Ascending aorta (tissue), 2 donors: ENCODE measurements at regions of chr4 and their contacts with region 1.

Region 1: DNA sequence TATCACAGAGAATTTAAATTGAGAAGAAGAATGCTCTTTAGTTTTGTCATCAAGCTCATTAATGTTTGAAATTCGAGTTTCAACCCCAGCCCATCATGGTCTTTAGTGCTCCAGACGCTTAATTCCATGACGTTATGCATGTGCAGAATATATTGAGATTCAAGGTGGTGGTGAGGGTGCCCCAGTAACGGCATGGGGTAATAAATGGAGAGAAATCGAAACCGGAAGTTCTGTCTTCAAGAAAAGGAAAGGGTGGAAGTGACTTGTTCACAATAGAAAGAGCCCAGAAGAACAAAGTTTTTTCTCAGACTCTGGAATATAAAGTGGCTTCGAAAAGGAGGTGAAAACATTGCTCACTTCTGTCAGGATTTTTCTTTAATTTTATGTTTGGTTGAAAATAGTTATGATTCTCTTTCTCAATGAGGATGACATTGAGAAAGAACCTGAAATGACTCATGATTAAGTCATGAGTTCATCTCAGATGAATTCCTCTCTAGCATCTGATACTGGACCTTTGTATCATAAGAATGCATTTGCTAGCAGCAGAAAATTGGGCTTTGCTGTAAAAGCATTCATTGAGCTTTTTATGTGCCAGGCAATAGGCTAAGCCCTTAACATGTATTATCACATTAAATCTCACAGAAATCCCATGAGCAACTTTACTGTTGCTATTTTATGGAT is 779 bp upstream of the DDX60L start:
- DNase-seq: no peak
- H3K4me3 ChIP-seq: peak overlapping the region; percentile 64 to 75
- H3K27ac ChIP-seq: peak overlapping the region; percentile 82 to 91
- H3K4me1 ChIP-seq: peaks cover 0 to 6% of the 10 kb centered on the region in 2 donors
- H3K27me3 ChIP-seq: no peaks in the 10 kb centered on the region
- CTCF ChIP-seq: no peak

Region 2: GRCh38 chr4:168318266-168318895 is 162.7 kb before region 1 on chr4 and contains the start of gene DDX60:
- intact Hi-C with region 1: loop called (anchors 2 kb)
- DNase-seq: peak; percentile 18 to 84
- H3K4me3 ChIP-seq: peak within 1 kb of the TSS; percentile 80 to 88
- H3K27ac ChIP-seq: peak within 1 kb of the TSS; percentile 89 to 91
- H3K4me1 ChIP-seq: peaks cover 0 to 7% of the 10 kb centered on the region in 2 donors
- H3K27me3 ChIP-seq: no peaks in the 10 kb centered on the region
- CTCF ChIP-seq: peak in 2 of 3 experiments; percentile 38 to 50
- total RNA-seq, gene DDX60: 15.3 TPM

Region 3: DNA sequence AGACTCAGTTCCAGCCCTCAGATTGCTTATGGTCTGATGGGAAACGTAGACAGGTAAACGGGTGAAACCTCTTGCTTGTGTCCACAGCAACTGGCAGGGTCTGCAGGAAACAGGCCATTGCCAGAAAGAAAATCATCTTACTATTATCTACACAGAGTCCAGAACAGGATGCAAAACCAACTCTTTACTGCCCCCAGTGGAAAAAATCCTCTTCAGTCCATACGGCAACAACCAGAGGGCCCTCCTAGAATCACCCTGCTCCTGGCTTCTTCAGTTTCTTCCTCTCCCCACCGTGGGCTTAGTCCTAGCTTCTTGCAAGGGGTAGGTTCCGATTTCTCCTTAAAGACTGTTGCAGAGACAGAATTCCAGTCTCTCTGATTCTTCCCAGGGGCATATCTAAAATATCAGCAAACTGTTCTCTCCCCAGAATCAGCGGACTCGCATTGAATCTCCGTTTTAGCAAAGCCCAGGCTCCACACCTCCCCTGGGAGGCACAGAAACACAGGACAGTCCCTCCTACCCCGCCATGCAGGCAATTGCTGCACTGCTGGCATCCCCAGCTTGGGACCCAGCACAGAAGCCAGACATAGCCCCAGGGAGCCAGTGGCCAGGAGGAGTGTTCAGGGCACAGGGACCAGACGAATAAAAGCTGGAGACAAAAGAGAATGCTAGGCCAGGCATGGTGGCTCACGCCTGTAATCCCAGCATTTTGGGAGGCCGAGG is 830.7 kb after region 1 on chr4:
- intact Hi-C with region 1: no loop called
- DNase-seq: no peak
- H3K4me3 ChIP-seq: no peak overlapping the region
- H3K27ac ChIP-seq: no peak overlapping the region
- H3K4me1 ChIP-seq: peaks cover 3 to 12% of the 10 kb centered on the region in 2 donors
- H3K27me3 ChIP-seq: no peaks in the 10 kb centered on the region
- CTCF ChIP-seq: peak in 2 of 3 experiments; percentile 18 to 59

Region 4: DNA sequence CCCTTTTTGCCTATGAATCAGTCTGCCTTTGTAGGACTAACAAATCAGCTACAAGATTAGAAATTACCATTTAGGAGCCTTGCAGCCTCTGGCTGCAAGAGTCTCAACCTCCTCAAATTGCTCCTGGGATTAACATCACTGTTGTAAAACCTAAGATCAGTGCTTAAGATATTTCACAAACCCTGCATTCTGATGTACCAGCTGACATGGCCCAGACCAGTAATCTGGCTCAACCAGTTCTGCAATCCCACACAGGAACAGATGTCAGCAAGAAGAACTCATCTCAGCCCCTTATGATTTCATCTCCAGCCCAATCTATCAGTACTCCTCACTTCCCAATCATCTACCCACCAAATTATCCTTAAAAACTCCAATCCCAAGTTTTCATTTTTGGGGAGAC is 1641.2 kb after region 1 on chr4:
- intact Hi-C with region 1: no loop called
- DNase-seq: no peak
- H3K4me3 ChIP-seq: no peak overlapping the region
- H3K27ac ChIP-seq: no peak overlapping the region
- H3K4me1 ChIP-seq: no peaks in the 10 kb centered on the region
- H3K27me3 ChIP-seq: no peaks in the 10 kb centered on the region
- CTCF ChIP-seq: no peak